Left cardiac atrium (tissue), 4 donors: ENCODE measurements at regions of chr16 and their contacts with region 1.

Region 1: DNA sequence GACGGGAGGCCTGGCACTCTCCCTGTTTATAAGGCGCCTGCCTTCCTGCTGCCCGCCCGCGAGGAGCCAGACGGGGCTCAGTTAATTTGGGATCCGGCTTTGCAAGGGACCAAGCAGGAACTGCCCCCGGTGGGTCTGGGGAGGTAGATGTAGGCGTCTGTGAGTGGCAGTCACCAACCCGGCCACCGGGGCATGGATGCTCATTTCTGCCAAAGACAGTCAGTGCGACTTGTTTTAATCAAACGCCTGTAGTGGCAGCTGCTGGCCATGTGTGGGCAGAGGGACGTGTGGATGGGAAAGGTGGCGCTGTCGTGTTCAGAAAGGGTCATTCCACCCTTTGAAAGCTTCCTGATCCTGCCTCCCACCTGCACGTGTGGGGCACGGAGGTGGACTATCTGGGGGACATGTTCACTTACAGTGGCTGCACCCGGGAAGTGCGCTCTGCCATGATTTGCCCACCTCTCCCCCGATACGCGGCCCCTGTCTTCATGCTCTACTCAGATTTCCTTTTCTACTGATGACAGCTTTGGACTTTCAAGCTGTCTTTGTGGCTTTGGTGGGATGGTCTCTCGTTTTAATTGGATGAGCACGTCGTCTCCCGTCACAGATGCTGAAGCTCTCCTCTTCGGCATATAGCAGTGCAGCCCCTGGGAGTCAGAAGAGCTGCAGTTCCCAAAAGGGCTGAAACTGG is 60.3 kb upstream of the CIBAR2 start:
- DNase-seq: no peak
- ATAC-seq: peak; percentile 6 to 24

Region 2: DNA sequence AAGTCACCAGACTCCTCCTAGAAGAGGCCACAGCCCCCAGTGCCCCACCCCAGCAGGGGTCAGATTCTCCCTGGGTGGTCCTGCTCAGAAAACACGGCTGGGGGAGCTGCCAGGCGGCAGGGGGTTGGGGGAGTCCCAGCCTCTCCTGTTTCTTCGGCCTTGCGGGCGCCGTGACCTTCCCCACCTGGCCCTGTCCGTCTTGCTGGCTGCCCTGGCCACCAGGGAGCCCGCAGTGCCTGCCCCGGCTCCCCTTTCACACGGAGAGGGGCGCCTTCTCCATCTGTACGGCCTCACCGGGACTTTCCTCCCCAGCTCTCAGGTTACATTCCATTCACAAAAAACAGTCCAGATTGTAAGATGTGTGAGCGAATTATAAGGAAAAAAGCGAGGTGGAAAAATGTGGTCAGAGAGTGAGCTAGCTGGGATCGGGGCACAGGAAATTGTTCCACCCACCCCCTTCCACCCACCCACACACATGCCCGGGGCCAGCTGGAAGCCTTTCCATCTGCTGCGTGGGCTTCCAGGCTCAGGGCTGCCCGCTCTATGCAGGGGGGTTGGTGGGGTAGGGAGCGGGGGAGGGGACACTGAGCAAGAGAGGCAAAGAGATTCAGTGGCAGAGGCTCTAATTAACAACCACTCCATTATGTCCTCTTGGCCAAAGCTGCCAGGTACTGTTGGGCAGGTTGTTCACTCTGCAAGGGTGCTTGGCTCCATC is 45.7 kb before region 1 on chr16:
- intact Hi-C with region 1: loop called in 1 of 2 experiments (anchors 5 kb)
- DNase-seq: peak; percentile 61
- ATAC-seq: peak; percentile 24 to 54

Region 3: DNA sequence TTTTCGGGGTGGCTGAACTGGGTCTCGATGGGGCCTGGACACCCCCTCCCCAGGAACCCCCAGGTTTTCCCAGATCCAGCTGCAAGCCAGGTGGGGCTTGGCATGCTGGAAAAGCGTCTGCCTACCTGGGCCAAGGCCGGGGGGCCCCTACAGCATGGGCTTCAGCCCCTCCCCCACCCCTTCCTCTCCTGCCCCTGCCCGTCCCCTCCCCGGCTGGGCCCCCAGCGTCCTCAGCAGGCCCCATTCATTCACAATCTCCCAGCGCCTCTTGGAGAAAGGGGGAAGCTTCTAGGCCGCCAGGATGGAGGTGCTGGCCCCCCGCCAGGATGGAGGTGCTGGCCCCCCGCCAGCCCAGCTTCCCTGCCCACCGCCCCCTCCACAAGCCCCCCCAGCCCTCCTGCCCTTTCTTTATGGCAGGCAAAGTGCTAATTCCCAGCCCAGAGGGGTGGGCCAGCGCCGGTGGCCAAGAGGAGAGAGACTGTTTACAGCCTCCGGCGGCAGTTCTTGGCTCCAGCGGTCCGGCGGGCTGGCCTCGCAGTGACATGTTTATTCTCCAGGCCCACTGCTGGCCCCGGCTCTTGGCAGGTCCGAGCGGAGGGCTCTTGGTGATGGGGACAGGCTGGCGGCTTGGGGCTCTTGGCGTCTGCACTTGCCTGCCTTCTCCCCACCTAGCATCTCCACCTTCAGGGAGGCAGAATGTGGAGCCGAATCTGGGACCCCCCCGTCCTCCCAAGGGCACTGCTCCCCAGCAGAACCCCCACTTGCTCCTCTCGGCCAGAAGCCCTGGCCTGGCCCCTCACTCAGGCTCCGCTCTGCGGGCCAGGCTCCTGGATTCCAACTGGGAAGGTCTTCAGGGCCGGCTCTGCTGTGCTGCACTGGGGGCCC is 34.1 kb after region 1 on chr16:
- intact Hi-C with region 1: no loop called
- DNase-seq: peak; percentile 77
- ATAC-seq: peak; percentile 56 to 74

Region 4: DNA sequence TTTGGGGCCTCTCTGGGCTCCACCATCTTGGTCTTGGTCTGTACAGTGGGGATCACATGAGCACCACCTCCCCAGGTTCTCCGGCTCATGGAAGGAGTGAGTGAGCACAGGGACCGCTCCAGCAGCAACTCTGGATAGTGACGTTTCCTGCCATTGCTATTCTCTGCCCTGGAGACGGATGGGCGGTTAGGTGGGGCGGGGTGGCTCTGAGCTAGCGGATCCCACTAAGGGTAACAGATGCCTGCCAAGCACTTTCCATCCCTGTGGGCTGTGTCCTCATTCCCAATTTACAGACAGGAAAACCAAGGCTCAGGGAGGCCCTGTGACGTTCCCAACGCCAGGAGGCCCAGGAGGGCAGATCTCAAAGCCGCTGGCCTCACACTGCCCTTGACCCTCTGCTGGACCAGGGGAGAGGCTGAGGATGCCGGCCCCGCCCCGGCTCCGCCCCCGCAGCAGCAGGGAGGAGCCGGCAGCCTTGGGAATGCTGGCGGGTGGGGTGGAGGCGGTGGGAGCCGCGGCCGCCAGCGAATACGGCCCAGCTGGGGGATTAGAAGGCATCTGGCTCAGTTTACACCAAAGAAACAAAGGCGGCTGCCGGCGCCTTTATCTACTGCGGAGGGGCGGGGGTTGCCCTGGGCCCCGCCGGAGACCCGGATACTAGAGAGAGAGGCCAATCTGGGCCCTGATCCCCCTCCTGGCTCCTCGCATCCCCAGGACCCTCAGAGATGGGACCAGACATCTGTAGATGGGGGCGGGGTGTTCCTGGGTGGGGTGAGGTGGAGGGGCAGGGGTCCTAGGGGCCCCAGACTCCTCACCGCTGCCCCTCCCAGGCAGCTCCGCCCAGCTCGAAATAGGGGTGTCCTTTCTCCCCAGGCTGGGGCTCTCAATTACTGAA is 62.0 kb after region 1 on chr16:
- intact Hi-C with region 1: loop called in 1 of 2 experiments (anchors 5 kb)
- DNase-seq: peak; percentile 82
- ATAC-seq: peak; percentile 68 to 79